Activated B cell treated with CpG ODN at 0.5 μM for 24 hours (primary cell): ENCODE measurements at regions of chr11 and their contacts with region 1.

Region 1: DNA sequence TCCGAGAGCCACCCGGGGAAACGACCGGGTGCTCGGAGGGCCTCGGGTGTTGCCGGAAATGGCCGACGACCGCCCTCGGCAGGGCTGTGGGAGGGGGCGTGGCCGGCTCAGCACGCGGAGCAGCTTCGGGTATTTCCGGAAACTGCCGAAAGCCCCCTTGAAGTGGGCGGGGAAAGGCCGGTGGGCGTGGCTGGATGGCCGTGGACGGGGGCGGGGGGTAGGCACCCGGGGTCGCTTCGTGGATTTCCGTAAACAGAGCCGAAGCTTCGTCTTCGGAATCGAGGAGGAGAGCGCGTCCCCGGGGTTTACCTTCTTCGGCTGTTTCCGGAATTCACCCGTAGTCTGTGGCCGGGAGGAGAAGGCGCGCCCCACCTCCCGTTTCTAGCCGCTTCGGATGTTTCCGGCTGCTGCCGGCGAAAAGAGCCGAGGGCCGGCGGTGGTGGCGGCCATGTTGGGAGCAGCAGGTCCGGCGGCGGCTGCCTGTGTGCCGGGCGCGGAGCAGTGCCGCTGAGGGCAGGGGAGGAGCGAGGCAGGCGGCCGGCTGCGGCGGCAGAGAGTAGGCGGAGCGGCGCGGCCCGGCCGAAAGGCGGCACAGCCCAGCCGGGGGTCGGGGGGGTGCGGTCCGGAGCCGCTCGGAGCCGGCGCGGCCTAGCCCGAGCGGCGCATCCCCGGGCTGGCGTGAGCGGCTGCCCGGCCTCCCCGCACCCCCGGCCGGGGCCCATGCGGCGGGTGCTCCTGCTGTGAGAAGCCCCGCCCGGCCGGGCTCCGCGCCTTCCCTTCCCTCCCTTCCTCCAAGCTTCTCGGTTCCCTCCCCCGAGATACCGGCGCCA is at the start of gene MARK2:
- DNase-seq: peak; percentile 100
- ATAC-seq: peak; percentile 84
- H3K4me3 Mint-ChIP-seq: peak within 1 kb of the TSS; percentile 95
- H3K27ac Mint-ChIP-seq: peak within 1 kb of the TSS; percentile 89
- H3K4me1 Mint-ChIP-seq: peaks cover 62% of the 10 kb centered on the region
- H3K27me3 Mint-ChIP-seq: no peaks in the 10 kb centered on the region
- CTCF ChIP-seq: no peak
- total RNA-seq, gene MARK2: 39.2 and 41.5 TPM in 2 replicates

Region 2: GRCh38 chr11:63671322-63672155 is 167.4 kb before region 1 on chr11 and contains the start of gene ATL3:
- CTCF ChIA-PET with region 1: interaction called, 3 read pairs
- POLR2A ChIA-PET with region 1: no interaction called
- intact Hi-C with region 1: loop called (anchors 2 kb)
- DNase-seq: peak; percentile 97
- ATAC-seq: peak; percentile 95
- H3K4me3 Mint-ChIP-seq: peak within 1 kb of the TSS; percentile 84
- H3K27ac Mint-ChIP-seq: peak within 1 kb of the TSS; percentile 82
- H3K4me1 Mint-ChIP-seq: peaks cover 25% of the 10 kb centered on the region
- H3K27me3 Mint-ChIP-seq: no peaks in the 10 kb centered on the region
- CTCF ChIP-seq: no peak
- total RNA-seq, gene ATL3: 31.8 and 32.9 TPM in 2 replicates

Region 3: GRCh38 chr11:63871962-63872799 is 33.3 kb after region 1 on chr11:
- CTCF ChIA-PET with region 1: interaction called, 5 read pairs
- POLR2A ChIA-PET with region 1: no interaction called
- intact Hi-C with region 1: loop called (anchors 5 kb)
- DNase-seq: no peak
- ATAC-seq: peak; percentile 70
- H3K4me3 Mint-ChIP-seq: no peak overlapping the region
- H3K27ac Mint-ChIP-seq: no peak overlapping the region
- H3K4me1 Mint-ChIP-seq: peaks cover 66% of the 10 kb centered on the region
- H3K27me3 Mint-ChIP-seq: no peaks in the 10 kb centered on the region
- CTCF ChIP-seq: no peak

Region 4: GRCh38 chr11:63916837-63917691 is 78.2 kb after region 1 on chr11 and contains the start of gene RCOR2:
- CTCF ChIA-PET with region 1: interaction called, 32 read pairs
- POLR2A ChIA-PET with region 1: interaction called, 4 read pairs
- intact Hi-C with region 1: loop called (anchors 1 kb)
- DNase-seq: peak; percentile 58
- ATAC-seq: peak; percentile 74
- H3K4me3 Mint-ChIP-seq: peak within 1 kb of the TSS; percentile 80
- H3K27ac Mint-ChIP-seq: no peak within 1 kb of the TSS
- H3K4me1 Mint-ChIP-seq: peaks cover 19% of the 10 kb centered on the region
- H3K27me3 Mint-ChIP-seq: peaks cover 2% of the 10 kb centered on the region
- CTCF ChIP-seq: no peak
- total RNA-seq, gene RCOR2: not detected in 2 replicates

Region 5: DNA sequence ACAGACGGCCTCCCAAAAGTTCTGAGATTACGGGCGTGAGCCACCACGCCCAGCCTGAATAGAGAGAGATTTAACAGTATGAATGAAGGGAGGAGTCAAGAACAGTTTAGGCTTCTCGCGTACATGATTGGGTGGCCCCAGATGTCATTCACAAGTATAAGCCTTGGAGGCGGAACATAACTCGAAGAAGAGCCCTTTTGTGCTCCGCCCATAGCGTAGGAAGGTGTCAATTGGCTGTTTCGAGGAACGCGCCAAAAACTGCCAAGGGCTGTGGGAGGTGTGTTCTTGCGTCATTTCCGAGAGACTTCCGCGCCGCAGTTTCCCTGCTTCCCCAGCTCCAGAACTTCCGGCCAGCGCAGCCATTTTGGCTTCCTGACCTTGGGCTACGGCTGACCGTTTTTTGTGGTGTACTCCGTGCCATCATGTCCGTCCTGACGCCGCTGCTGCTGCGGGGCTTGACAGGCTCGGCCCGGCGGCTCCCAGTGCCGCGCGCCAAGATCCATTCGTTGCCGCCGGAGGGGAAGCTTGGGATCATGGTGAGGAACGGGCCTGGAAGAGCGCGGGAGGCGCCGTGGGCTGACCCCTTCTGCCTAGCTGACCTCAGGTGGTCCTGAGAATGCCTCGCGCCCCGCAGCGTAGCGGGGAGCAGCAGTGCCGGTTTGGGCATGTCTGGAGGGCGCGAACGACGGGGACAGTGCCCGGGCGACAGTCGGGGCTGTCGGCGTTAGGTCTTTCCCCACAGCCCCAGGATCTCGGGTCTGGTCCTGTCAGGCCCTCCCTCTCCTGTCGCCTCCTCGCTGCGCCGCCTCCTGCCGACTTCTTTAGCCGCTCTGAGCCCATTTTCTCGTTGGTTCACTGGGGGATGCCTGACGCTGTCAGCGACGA is 135.6 kb after region 1 on chr11 and contains the start of gene COX8A:
- CTCF ChIA-PET with region 1: interaction called, 3 read pairs
- POLR2A ChIA-PET with region 1: interaction called, 10 read pairs
- intact Hi-C with region 1: loop called (anchors 1 kb)
- DNase-seq: peak; percentile 78
- ATAC-seq: peak; percentile 99
- H3K4me3 Mint-ChIP-seq: peak within 1 kb of the TSS; percentile 100
- H3K27ac Mint-ChIP-seq: peak within 1 kb of the TSS; percentile 98
- H3K4me1 Mint-ChIP-seq: peaks cover 27% of the 10 kb centered on the region
- H3K27me3 Mint-ChIP-seq: no peaks in the 10 kb centered on the region
- CTCF ChIP-seq: no peak
- total RNA-seq, gene COX8A: 182 and 217 TPM in 2 replicates

Region 6: DNA sequence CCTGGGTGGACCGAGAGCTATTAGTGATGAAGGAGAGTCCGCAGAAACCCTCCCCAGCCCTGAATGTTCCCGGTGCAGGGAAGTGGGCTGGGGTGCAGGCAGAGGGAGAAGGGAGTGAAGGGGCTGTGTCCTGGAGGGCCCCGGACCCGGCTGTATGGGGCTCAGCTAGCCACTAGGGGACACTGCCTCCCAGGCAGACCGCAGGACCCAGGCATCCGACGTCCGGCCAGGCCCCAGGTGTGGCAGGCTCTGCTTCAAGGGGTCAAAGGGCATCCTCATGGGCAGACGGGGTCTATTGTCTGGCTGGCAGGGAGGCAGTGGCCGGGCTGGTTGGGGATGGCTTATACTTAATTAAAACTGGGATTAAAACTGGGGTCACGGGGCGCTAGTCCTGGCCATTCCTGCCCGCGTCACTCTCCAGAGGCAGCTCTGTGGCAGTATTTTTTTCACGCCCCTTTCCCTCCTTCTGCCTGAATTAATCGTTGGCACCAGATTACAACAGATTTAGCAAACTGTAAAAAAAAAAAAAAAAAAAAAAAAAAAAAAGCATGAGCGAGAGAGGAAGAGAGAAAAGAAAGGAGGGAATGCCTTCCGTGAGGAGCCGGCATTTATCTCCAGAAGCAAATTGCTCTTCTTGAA is 201.9 kb after region 1 on chr11:
- CTCF ChIA-PET with region 1: no interaction called
- POLR2A ChIA-PET with region 1: no interaction called
- intact Hi-C with region 1: no loop called
- DNase-seq: no peak
- ATAC-seq: no peak
- H3K4me3 Mint-ChIP-seq: no peak overlapping the region
- H3K27ac Mint-ChIP-seq: no peak overlapping the region
- H3K4me1 Mint-ChIP-seq: no peaks in the 10 kb centered on the region
- H3K27me3 Mint-ChIP-seq: peaks cover 18% of the 10 kb centered on the region
- CTCF ChIP-seq: no peak

Region 7: GRCh38 chr11:64152841-64153691 is 314.2 kb after region 1 on chr11:
- CTCF ChIA-PET with region 1: interaction called, 63 read pairs
- POLR2A ChIA-PET with region 1: interaction called, 5 read pairs
- intact Hi-C with region 1: loop called (anchors 1 kb)
- DNase-seq: peak; percentile 77
- ATAC-seq: peak; percentile 96
- H3K4me3 Mint-ChIP-seq: no peak overlapping the region
- H3K27ac Mint-ChIP-seq: no peak overlapping the region
- H3K4me1 Mint-ChIP-seq: peaks cover 3% of the 10 kb centered on the region
- H3K27me3 Mint-ChIP-seq: peaks cover 7% of the 10 kb centered on the region
- CTCF ChIP-seq: peak; percentile 97